ENCODE measurements at regions of chr4 and their contacts with region 1.

Region 1: DNA sequence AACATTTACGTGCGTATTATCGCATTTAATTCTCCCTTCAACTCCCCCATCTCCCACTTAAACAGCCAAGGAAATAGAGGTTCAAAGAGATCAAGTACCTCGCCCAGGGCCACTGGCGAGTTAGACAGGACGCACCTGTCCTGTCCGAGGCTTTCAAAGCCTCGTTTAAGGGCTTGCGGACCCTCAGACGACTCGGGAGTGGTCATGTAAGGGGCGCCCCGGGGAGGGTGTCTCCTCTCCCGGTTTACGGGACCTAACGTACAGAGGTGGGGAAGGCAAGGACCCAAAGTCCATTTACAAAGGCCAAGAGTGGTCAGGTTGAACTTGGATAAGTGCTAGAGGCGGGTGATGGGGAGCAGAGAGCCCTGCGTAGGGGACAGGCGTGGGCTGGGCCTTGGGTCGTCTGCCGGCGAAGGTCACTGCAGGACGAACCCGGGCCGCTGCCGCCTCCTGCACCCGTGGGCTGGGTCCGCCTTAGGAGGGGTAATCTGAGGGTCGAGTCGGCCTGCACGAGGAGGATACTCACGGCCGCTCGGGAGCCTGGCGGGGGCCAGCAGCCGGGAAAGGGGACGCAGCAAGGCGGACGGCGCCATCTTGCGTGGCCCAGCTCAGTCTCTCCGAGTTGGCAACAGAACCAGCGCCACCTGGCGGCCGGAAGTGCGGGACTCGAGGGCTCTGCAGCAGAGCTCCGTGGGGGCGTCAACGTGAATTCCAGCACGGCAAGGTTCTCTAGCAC is 5.9 kb upstream of the NAA15 start:
- DNase-seq: peak; percentile 91
- H3K4me3 ChIP-seq: peak overlapping the region; percentile 71 to 89
- H3K27ac ChIP-seq: peak overlapping the region; percentile 64 to 86
- H3K4me1 ChIP-seq: peaks cover 16 to 20% of the 10 kb centered on the region in 2 experiments; a peak in 3 of 4 replicates
- H3K27me3 ChIP-seq: no peaks in the 10 kb centered on the region
- CTCF ChIP-seq: peak; percentile 87
- EP300 ChIP-seq: peak in 1 of 2 experiments; percentile 24; a peak in 1 of 4 replicates
- RAD21 ChIP-seq: peak; percentile 87

Region 2: DNA sequence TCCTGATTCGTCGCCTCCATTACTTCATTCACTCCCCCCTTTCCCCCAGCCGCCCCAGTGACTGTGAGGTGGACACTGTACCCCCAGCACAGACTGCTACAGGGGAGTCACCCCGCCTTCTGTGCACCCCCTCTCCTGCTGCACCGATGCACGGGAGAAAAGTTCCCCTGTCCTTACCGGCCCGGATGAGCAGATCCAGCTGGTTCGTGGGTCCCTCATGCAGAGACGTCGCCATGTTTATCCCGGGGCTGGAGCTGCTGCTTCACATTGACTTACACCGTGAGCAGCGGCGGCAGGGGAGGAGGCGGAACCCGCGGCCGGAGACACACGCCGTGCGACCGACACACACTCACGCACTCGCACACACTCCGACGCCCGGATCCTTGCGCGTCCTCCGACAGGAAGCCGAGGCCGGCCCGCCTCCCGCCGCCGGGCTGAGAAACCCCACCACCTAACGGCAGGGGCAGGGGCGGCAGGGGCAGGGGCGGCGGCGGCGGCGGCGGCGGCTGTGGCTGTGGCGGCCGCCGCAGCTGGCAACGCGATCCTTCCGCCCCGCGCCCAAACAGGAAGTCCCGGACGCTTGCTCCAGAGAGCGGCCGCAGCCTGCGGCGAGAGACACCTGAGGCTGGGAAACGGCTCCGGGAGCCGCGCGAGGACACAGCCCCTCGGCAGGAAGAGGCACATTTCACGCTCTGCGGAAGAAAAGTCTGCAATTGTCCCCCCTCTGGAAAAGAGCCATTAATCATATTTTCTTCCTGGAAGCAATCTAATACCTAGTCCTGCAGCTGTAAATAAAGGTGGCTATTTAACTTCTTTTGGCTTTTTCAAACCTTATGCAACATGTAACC is 211.2 kb before region 1 on chr4:
- CTCF ChIA-PET with region 1: interaction called, 15 read pairs
- POLR2A ChIA-PET with region 1: no interaction called
- DNase-seq: peak; percentile 91
- H3K4me3 ChIP-seq: peak overlapping the region; percentile 68 to 84
- H3K27ac ChIP-seq: peak overlapping the region; percentile 97 to 98
- H3K4me1 ChIP-seq: peaks cover 9 to 10% of the 10 kb centered on the region in 2 experiments; a peak in 2 of 4 replicates
- H3K27me3 ChIP-seq: no peaks in the 10 kb centered on the region
- CTCF ChIP-seq: peak; percentile 39; the same call in 1 of the 2 replicates
- EP300 ChIP-seq: no peak; a peak in 1 of 4 replicates
- RAD21 ChIP-seq: no peak

Region 3: DNA sequence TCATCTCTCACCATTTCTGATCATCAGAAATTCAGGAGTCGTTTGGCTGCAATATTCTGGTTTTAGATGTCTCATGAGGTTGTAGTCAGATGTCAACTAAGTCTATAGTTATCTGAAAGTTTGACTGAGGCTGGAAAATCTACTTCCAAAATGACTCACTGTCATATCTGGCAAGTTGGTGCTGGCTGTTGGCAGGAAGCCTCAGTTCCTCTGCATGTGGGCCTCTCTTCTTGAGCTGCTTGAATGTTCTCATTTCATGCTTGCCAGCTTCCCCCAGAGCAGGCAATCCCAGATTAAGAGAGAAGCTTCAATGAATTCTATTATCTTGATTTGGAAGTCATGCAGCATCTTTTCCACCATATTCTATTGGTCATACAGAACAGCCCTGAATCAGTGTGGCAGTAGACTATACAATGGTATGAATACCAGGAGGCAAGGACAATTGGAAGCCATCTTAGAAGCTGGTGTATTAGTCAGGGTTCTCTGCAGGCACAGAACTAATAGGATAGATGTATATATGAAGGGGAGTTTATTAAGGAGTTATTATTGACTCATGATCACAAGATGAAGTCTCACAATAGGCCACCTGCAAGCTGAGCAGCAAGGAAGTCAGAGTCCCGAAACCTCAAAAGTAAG is 71.6 kb before region 1 on chr4:
- CTCF ChIA-PET with region 1: interaction called, 38 read pairs
- POLR2A ChIA-PET with region 1: interaction called, 3 read pairs
- DNase-seq: no peak
- H3K4me3 ChIP-seq: no peak overlapping the region
- H3K27ac ChIP-seq: 0 out of 4 replicates have a peak overlapping the region, but pooled peaks of 1 of the 2 experiments have one; percentile 18
- H3K4me1 ChIP-seq: peaks cover 0 to 5% of the 10 kb centered on the region in 2 experiments; a peak in 1 of 4 replicates
- H3K27me3 ChIP-seq: no peaks in the 10 kb centered on the region
- CTCF ChIP-seq: no peak
- EP300 ChIP-seq: no peak
- RAD21 ChIP-seq: no peak

Region 4: DNA sequence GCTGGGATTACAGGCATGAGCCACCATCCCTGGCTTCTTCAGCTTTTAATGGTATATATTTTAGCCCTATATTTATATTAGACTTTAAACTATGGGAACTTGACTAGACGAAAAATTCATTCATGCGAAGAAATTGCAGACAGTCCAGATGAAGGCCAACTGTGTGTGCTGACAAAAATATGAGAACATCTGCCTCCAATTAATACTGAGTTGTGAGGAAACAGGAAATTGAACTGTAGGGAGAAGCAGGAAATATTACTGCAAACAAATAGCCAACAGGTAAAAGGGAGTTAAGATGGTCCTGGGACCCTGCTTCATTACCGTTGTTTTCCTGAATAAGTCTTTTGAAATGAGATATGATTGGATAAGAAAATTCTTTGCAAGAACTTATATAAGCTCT is 41.7 kb before region 1 on chr4:
- CTCF ChIA-PET with region 1: interaction called, 11 read pairs
- POLR2A ChIA-PET with region 1: interaction called, 3 read pairs
- DNase-seq: peak; percentile 28
- H3K4me3 ChIP-seq: no peak overlapping the region
- H3K27ac ChIP-seq: peak overlapping the region; percentile 51 to 74
- H3K4me1 ChIP-seq: peaks cover 4 to 13% of the 10 kb centered on the region in 2 experiments
- H3K27me3 ChIP-seq: no peaks in the 10 kb centered on the region
- CTCF ChIP-seq: no peak
- EP300 ChIP-seq: no peak
- RAD21 ChIP-seq: no peak

Region 5: DNA sequence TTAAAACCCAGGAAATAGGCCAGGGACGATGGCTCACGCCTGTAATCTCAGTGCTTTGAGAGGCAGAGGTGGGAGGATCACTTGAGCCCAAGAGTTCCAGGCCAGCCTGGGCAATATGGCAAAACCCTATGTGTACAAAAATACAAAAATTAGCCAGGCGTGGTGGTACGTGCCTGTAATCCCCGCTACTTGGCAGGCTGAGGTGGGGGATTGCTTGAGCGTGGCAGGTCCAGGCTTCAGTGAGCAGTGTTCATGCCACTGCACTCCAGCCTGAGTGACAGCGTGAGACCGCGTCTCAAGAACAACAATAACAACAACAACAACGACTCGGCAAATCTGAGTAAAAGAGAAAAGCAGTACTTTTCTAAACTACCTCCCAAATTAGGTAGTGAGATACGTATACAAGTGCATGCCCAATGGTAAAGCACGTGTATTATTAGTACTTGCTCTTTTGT is 19.9 kb after region 1 on chr4:
- CTCF ChIA-PET with region 1: interaction called, 10 read pairs
- POLR2A ChIA-PET with region 1: no interaction called
- DNase-seq: no peak
- H3K4me3 ChIP-seq: no peak overlapping the region
- H3K27ac ChIP-seq: no peak overlapping the region
- H3K4me1 ChIP-seq: peaks cover 0 to 13% of the 10 kb centered on the region in 2 experiments; a peak in 1 of 4 replicates
- H3K27me3 ChIP-seq: no peaks in the 10 kb centered on the region
- CTCF ChIP-seq: no peak
- EP300 ChIP-seq: no peak
- RAD21 ChIP-seq: no peak

Measured in SK-N-SH (cell line).